Activated T-helper 2 cell treated with anti-CD3 and anti-CD28 coated beads, Interferon-gamma antibody, Interleukin-2, Interleukin-4, amounts not matched to agents 10 μg/mL and 5 μg/mL and 100 μg/mL, durations not matched to agents 14 hours and 24 hours and 36 hours (primary cell): ENCODE measurements at regions of chr9 and their contacts with region 1.

Region 1: GRCh38 chr9:99819856-99820684 is 1.6 kb upstream of the NR4A3 start:
- DNase-seq: peak; percentile 87
- H3K4me3 Mint-ChIP-seq: peak overlapping the region; percentile 100
- H3K27ac Mint-ChIP-seq: peak overlapping the region; percentile 98
- H3K4me1 Mint-ChIP-seq: peaks cover 44% of the 10 kb centered on the region
- H3K27me3 Mint-ChIP-seq: peaks cover 3% of the 10 kb centered on the region

Region 2: DNA sequence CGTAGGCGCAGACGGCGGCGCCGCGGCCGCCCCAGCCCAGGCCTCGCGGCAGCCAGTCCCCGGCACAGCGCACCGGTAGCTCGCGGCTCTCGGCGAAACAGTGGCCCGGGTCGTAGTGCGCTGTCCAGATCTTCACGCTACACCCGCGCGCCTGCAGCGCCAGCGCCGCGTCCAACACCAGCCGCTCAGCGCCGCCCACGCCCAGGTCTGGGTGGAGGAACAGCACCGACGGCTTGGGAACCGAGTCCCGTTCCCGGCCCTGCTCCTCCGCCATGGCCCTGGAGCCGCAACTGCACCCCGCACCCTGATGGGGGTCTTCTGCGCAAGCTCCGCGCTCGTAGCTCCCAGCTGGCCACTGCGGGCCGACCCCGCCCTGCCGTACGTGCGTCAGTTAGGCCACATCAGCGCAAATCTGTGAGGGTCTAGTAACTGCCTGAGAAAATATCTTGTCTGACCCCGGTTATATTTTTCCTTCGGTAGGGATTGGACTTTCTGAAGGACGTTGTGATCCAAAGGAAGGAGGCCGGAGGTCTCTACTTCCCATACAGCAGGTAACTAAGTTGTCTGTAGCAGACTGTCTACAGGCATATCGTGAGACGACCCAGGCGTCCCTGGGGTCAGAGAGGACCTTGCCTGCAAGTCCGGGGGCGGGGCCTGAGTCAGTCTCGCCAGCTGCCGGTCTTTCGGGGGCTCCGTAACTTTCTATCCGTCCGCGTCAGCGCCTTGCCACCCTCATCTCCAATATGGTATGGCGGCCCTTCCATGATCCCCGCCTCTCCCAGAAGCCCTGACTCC is 598.3 kb before region 1 on chr9 and contains the starts of genes ALG2 and SEC61B:
- intact Hi-C with region 1: loop called (anchors 2 kb)
- DNase-seq: peak; percentile 88
- H3K4me3 Mint-ChIP-seq: peak within 1 kb of the TSS; percentile 93
- H3K27ac Mint-ChIP-seq: peak within 1 kb of the TSS; percentile 100
- H3K4me1 Mint-ChIP-seq: peaks cover 51% of the 10 kb centered on the region
- H3K27me3 Mint-ChIP-seq: no peaks in the 10 kb centered on the region
- total RNA-seq, gene ALG2: 39.5 and 41.7 TPM in 2 replicates
- total RNA-seq, gene SEC61B: 208 and 223 TPM in 2 replicates

Region 3: DNA sequence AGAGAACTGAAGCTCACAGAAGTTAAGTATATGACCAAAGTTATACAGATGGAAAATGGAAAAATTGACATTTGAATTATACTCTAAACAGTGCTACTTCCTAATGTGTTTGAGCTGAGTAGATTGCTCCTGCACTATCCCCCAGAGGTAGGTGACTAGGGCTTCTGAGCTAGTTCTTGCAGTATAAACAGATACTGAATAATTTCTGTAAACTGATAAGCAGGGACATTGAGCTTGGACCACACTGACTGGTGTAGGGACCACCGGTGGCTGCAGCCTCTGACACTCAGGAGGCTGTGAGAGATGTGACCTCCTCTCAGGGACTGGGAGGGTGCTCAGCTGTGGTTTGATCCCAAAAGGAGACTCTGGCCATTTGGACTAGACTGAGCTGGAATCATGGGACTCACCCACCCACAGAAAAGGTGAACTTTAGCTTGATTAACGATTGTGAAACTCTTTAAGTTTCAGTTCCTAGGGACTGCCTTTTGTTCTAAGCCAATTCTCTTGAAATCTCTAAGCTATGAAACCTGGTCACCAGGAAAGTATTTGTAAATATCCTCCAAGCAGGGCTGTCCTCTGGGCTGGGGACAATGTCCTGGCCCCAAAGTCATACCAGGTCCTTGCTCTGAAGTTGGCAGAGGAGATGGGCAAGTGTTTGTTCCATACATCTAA is 306.5 kb before region 1 on chr9:
- intact Hi-C with region 1: loop called (anchors 2 kb)
- DNase-seq: no peak
- H3K4me3 Mint-ChIP-seq: no peak overlapping the region
- H3K27ac Mint-ChIP-seq: peak overlapping the region; percentile 64
- H3K4me1 Mint-ChIP-seq: peaks cover 28% of the 10 kb centered on the region
- H3K27me3 Mint-ChIP-seq: no peaks in the 10 kb centered on the region

Region 4: DNA sequence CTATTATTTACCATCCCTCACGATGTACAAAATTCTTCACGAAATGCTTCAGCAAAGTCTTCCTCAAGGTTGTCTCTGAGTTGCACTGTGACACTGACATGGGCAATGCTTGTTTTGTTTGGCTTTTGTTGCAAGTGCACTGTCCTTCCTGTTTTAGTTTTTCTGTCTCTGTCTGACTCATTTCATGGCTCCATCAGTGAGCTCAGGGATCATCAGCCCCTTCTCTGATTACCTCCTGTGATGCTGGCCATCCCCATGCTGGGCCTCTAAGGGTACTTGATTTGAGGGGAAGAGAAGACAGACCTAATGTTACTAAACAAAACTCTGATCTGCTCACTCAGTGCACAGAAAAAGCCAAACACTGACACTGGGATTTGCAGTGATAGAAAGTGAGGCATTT is 48.8 kb after region 1 on chr9:
- intact Hi-C with region 1: loop called (anchors 5 kb)
- DNase-seq: no peak
- H3K4me3 Mint-ChIP-seq: peak overlapping the region; percentile 11
- H3K27ac Mint-ChIP-seq: peak overlapping the region; percentile 51
- H3K4me1 Mint-ChIP-seq: peaks cover 51% of the 10 kb centered on the region
- H3K27me3 Mint-ChIP-seq: no peaks in the 10 kb centered on the region

Region 5: GRCh38 chr9:100084734-100085133 is 264.7 kb after region 1 on chr9:
- intact Hi-C with region 1: loop called (anchors 5 kb)
- DNase-seq: no peak
- H3K4me3 Mint-ChIP-seq: no peak overlapping the region
- H3K27ac Mint-ChIP-seq: peak overlapping the region; percentile 67
- H3K4me1 Mint-ChIP-seq: peaks cover 65% of the 10 kb centered on the region
- H3K27me3 Mint-ChIP-seq: no peaks in the 10 kb centered on the region

Region 6: DNA sequence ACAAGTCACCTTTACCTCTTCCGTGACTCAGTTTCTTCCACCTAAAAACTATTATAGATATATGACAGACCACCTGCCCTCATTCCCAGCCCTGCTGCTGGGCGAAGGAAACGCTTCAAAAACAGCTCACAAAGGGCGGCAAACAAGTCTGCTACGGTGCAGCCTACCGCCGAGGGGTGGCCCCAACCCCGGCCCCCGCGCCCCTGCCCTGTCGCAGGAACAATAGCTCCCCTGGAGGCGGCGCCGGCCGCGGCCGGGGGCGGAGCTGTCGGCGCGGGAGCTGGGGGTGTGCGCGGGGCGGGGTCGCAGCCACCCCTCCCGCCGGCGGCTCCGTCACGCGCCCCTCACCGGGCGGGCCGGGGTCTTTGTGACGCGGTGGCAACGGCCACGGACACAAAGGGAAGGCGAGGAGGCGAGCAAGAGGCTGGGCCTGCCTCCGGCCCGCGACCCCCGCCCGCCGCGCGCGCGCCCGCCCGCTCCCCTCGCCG is 652.8 kb after region 1 on chr9 and contains the start of gene TMEFF1:
- intact Hi-C with region 1: loop called (anchors 5 kb)
- DNase-seq: peak; percentile 27
- H3K4me3 Mint-ChIP-seq: peak within 1 kb of the TSS; percentile 68
- H3K27ac Mint-ChIP-seq: no peak within 1 kb of the TSS
- H3K4me1 Mint-ChIP-seq: peaks cover 8% of the 10 kb centered on the region
- H3K27me3 Mint-ChIP-seq: peaks cover 45% of the 10 kb centered on the region
- total RNA-seq, gene TMEFF1: 0.52 and 1.1 TPM in 2 replicates